GM12878 (cell line): ENCODE measurements at regions of chr11 and their contacts with region 1.

Region 1: DNA sequence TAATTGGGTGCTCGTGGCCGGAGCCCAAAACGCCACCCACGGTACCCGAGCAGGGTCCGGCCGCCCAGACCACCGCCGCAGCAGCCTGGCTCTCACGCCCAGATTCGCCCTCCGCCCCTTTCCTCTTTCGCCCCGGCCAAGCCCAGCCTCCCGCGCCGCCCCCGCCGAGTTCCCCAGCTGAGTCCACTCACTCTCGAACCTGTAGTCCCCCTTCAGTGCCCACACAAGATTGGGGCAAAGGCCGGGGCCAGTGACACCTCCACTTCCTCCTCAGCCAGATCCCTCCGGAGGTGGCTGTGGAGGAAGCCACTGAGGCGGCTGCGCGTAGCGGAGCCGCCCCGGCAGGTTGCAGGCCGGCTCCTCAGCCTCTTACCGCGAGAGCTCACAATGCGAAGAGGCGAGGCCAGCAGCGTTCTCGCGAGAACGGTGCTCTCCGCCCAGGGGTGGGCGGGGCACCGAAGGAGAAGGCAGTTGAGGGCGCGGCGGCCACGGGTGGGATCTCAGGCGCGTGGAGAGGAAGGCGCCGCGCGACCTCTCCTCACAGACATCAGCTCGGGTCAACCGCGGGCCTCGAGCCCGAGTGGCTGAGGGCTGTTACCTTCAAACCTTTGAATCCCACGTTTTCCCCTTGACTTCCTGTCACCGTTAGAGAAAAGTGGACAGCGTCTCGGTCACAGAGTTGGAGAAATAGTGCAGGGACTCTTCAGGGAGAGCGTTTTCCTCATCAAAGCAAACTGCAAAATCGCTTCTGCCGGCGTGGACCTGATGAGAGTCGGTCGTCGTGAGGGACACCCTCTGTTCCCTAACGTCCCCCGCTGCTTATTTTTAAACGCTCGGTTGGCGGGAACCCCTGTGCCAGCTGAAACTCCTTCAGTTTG is at the start of gene BTBD10:
- DNase-seq: peak; percentile 89
- ATAC-seq: peak; percentile 97
- H3K4me3 ChIP-seq: peak within 1 kb of the TSS; percentile 90
- H3K27ac ChIP-seq: peak within 1 kb of the TSS; percentile 88
- H3K4me1 ChIP-seq: no peaks in the 10 kb centered on the region
- H3K27me3 ChIP-seq: no peaks in the 10 kb centered on the region
- CTCF ChIP-seq: no peak
- EP300 ChIP-seq: no peak
- POLR2A ChIP-seq: peak; percentile 99
- RAD21 ChIP-seq: no peak
- polyA plus RNA-seq, gene BTBD10: 25.4 to 25.6 TPM

Region 2: GRCh38 chr11:13210424-13210823 is 252.7 kb before region 1 on chr11:
- CTCF ChIA-PET with region 1: interaction called, 9 read pairs
- POLR2A ChIA-PET with region 1: no interaction called
- RAD21 ChIA-PET with region 1: interaction called, 8 read pairs
- SMC1A ChIA-PET with region 1: interaction called, 18 read pairs
- in situ Hi-C with region 1: no loop called
- intact Hi-C with region 1: loop called (anchors 5 kb)
- DNase-seq: no peak
- ATAC-seq: peak; percentile 66
- H3K4me3 ChIP-seq: no peak overlapping the region
- H3K27ac ChIP-seq: no peak overlapping the region
- H3K4me1 ChIP-seq: peaks cover 12% of the 10 kb centered on the region
- H3K27me3 ChIP-seq: no peaks in the 10 kb centered on the region; a peak in 1 of 4 replicates
- CTCF ChIP-seq: peak; percentile 32 to 49 (median 47); a peak in 5 of 6 replicates
- EP300 ChIP-seq: no peak
- POLR2A ChIP-seq: no peak
- RAD21 ChIP-seq: peak; percentile 74

Region 3: GRCh38 chr11:13328286-13328685 is 134.9 kb before region 1 on chr11:
- CTCF ChIA-PET with region 1: no interaction called
- POLR2A ChIA-PET with region 1: no interaction called
- RAD21 ChIA-PET with region 1: no interaction called
- SMC1A ChIA-PET with region 1: no interaction called
- in situ Hi-C with region 1: no loop called
- intact Hi-C with region 1: no loop called
- DNase-seq: no peak
- ATAC-seq: no peak
- H3K4me3 ChIP-seq: no peak overlapping the region
- H3K27ac ChIP-seq: no peak overlapping the region
- H3K4me1 ChIP-seq: peaks cover 9% of the 10 kb centered on the region; the same call in 1 of the 2 replicates
- H3K27me3 ChIP-seq: no peaks in the 10 kb centered on the region
- CTCF ChIP-seq: no peak
- EP300 ChIP-seq: no peak
- POLR2A ChIP-seq: no peak
- RAD21 ChIP-seq: no peak

Region 4: DNA sequence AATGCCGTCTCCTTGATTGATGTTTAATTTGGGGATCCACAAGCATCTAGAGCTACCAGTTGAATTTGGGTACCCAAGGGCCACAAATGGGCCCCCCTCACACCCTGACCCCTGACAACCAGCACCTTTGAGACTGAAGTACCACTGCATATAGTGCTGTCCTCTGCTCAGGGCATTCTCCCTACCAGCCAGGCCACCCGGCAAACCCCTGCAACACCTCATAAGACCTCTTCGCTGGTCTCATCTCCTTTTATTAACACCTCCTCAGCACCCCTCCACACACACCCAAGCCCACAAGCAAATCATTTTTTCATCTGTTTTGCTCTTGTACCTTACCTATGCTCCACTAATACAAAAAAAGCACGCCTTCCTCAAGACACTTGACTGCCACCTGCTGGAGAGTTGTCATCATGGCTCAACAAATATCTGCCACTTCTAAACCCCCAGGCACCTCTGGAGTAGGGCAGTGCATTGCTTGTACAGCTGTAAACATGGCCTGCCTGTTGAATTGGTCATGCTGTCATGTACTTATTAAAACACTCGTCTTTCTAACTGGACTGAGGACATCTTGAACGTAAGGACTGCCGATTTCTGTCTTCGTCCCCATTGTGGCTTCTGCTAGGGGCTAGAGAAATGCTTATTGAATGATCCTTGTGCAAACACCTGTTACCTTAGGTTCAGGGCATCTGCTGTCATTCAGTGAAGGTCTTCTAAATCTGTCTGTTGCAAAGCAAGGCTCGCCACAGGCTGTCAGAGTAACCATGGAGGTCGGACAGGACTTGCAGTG is 119.0 kb before region 1 on chr11:
- CTCF ChIA-PET with region 1: interaction called, 11 read pairs
- POLR2A ChIA-PET with region 1: interaction called, 7 read pairs
- RAD21 ChIA-PET with region 1: no interaction called
- SMC1A ChIA-PET with region 1: interaction called, 5 read pairs
- in situ Hi-C with region 1: no loop called
- intact Hi-C with region 1: no loop called
- DNase-seq: no peak
- ATAC-seq: peak; percentile 69
- H3K4me3 ChIP-seq: no peak overlapping the region
- H3K27ac ChIP-seq: no peak overlapping the region
- H3K4me1 ChIP-seq: peaks cover 40% of the 10 kb centered on the region
- H3K27me3 ChIP-seq: no peaks in the 10 kb centered on the region
- CTCF ChIP-seq: peak; percentile 79 to 84 (median 80)
- EP300 ChIP-seq: no peak
- POLR2A ChIP-seq: no peak
- RAD21 ChIP-seq: peak; percentile 84

Region 5: DNA sequence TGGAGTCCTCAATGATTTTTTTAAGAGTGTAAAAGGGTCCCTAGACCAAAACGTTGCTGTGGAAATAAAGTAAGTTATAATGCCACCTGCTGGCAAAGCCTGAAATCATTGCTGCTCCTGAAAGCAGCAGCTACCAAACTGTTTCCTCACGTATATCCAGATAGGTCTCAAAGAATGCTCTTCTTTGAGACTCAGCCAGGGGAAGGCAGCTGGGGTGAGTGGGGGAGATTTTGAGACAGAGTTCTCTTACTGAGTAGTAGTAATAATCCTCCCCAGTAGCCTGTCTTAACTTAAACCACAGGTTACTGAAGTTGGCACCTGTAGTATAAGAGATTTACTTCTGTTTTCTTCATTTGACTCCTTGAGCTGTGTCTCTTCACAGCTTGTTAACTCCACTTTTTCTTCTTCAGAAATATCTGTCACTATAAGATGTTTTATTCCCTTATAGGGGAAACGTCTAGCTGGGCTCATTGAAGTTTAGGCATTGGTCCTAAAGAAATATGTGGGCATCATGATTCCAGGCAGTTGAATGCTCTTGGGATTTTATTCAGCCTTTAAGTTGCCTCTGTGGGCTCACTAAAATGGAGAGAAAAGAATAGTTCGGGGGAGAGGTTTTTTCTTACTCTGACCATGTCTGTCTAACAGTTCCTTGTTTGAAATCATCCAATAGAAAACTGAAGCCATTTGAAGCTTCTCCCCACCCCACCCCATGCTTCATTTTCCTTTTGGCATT is 78.1 kb before region 1 on chr11:
- CTCF ChIA-PET with region 1: interaction called, 36 read pairs
- POLR2A ChIA-PET with region 1: interaction called, 3 read pairs
- RAD21 ChIA-PET with region 1: interaction called, 10 read pairs
- SMC1A ChIA-PET with region 1: interaction called, 17 read pairs
- in situ Hi-C with region 1: no loop called
- intact Hi-C with region 1: no loop called
- DNase-seq: peak; percentile 3
- ATAC-seq: peak; percentile 74
- H3K4me3 ChIP-seq: no peak overlapping the region
- H3K27ac ChIP-seq: no peak overlapping the region
- H3K4me1 ChIP-seq: no peaks in the 10 kb centered on the region
- H3K27me3 ChIP-seq: no peaks in the 10 kb centered on the region
- CTCF ChIP-seq: peak; percentile 58 to 69 (median 58)
- EP300 ChIP-seq: no peak
- POLR2A ChIP-seq: no peak
- RAD21 ChIP-seq: peak; percentile 58

Region 6: GRCh38 chr11:13448876-13449275 is 14.3 kb before region 1 on chr11:
- CTCF ChIA-PET with region 1: interaction called, 11 read pairs
- POLR2A ChIA-PET with region 1: interaction called, 9 read pairs
- RAD21 ChIA-PET with region 1: interaction called, 30 read pairs
- SMC1A ChIA-PET with region 1: interaction called, 19 read pairs
- in situ Hi-C with region 1: no loop called
- intact Hi-C with region 1: no loop called
- DNase-seq: no peak
- ATAC-seq: 0 out of 3 replicates have a peak, but pooled peaks have one; percentile 36
- H3K4me3 ChIP-seq: no peak overlapping the region
- H3K27ac ChIP-seq: no peak overlapping the region
- H3K4me1 ChIP-seq: no peaks in the 10 kb centered on the region; the same call in 1 of the 2 replicates
- H3K27me3 ChIP-seq: no peaks in the 10 kb centered on the region
- CTCF ChIP-seq: no peak
- EP300 ChIP-seq: no peak
- POLR2A ChIP-seq: no peak
- RAD21 ChIP-seq: no peak

Region 7: GRCh38 chr11:13668102-13668956 is 205.2 kb after region 1 on chr11 and contains the start of gene FAR1:
- CTCF ChIA-PET with region 1: no interaction called
- POLR2A ChIA-PET with region 1: interaction called, 6 read pairs
- RAD21 ChIA-PET with region 1: no interaction called
- SMC1A ChIA-PET with region 1: interaction called, 6 read pairs
- in situ Hi-C with region 1: no loop called
- intact Hi-C with region 1: loop called (anchors 5 kb)
- DNase-seq: peak; percentile 95
- ATAC-seq: peak; percentile 91
- H3K4me3 ChIP-seq: peak within 1 kb of the TSS; percentile 77
- H3K27ac ChIP-seq: peak within 1 kb of the TSS; percentile 81
- H3K4me1 ChIP-seq: peaks cover 19% of the 10 kb centered on the region
- H3K27me3 ChIP-seq: no peaks in the 10 kb centered on the region
- CTCF ChIP-seq: peak; percentile 59 to 79 (median 59); a peak in 5 of 6 replicates
- EP300 ChIP-seq: peak in 1 of 2 experiments; percentile 48; a peak in 1 of 4 replicates
- POLR2A ChIP-seq: peak; percentile 81
- RAD21 ChIP-seq: peak; percentile 41; the same call in 1 of the 2 replicates
- polyA plus RNA-seq, gene FAR1: 10.1 to 11.5 TPM